ENCODE measurements at regions of chr5 and their contacts with region 1.

Region 1: GRCh38 chr5:91641730-91642350 is 258.7 kb upstream of the ARRDC3 start:
- DNase-seq: peak; percentile 3
- H3K4me3 ChIP-seq: no peak overlapping the region
- H3K27ac ChIP-seq: no peak overlapping the region
- H3K27me3 ChIP-seq: no peaks in the 10 kb centered on the region
- CTCF ChIP-seq: peak; percentile 58

Region 2: GRCh38 chr5:91499943-91500531 is 141.8 kb before region 1 on chr5:
- CTCF ChIA-PET with region 1: interaction called, 14 read pairs
- POLR2A ChIA-PET with region 1: no interaction called
- DNase-seq: peak; percentile 20
- H3K4me3 ChIP-seq: no peak overlapping the region
- H3K27ac ChIP-seq: no peak overlapping the region
- H3K27me3 ChIP-seq: peaks cover 3% of the 10 kb centered on the region
- CTCF ChIP-seq: peak; percentile 66

Region 3: DNA sequence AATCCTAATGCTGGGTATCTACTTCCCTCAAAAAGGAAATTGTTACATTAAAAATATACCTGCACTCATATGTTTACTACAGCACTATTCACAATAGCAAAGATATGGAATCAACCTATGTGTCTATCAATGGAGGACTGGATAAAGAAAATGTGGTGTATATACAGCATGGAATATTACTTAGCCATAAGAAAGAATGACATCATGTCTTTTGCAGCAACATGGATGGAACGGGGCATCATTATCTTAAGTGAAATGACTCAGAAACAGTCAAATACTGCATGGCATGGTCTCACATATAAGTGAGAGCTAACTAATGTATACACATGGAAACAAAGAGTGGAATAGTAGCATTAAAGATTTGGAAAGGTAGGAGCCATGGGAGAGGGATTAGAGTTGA is 15.1 kb after region 1 on chr5:
- CTCF ChIA-PET with region 1: interaction called, 22 read pairs
- POLR2A ChIA-PET with region 1: no interaction called
- DNase-seq: no peak
- H3K4me3 ChIP-seq: no peak overlapping the region
- H3K27ac ChIP-seq: no peak overlapping the region
- H3K27me3 ChIP-seq: no peaks in the 10 kb centered on the region
- CTCF ChIP-seq: no peak

Region 4: DNA sequence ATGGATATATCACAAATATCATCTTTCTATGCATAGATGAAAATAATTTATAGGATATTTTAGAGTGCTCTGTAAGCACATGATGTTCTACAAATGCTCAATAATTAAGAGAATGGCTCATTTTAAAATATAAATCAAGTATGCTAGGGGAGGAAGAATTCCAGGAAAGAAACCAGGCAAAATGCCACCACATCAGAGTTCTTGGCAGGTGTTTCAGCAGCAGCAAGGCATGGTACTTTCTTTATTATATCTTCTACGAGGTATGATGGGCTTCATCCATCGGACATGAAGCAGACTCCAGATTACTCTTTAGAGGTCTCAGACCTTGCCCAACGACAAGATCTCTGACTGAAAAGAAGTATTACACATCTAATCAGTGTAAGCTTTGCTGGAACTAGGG is 57.6 kb after region 1 on chr5:
- CTCF ChIA-PET with region 1: no interaction called
- POLR2A ChIA-PET with region 1: no interaction called
- DNase-seq: no peak
- H3K4me3 ChIP-seq: no peak overlapping the region
- H3K27ac ChIP-seq: no peak overlapping the region
- H3K27me3 ChIP-seq: no peaks in the 10 kb centered on the region
- CTCF ChIP-seq: no peak

Region 5: GRCh38 chr5:91722736-91723467 is 81.1 kb after region 1 on chr5:
- CTCF ChIA-PET with region 1: no interaction called
- POLR2A ChIA-PET with region 1: no interaction called
- DNase-seq: no peak
- H3K4me3 ChIP-seq: no peak overlapping the region
- H3K27ac ChIP-seq: no peak overlapping the region
- H3K27me3 ChIP-seq: no peaks in the 10 kb centered on the region
- CTCF ChIP-seq: no peak

Region 6: GRCh38 chr5:92222449-92222848 is 580.6 kb after region 1 on chr5:
- CTCF ChIA-PET with region 1: interaction called, 11 read pairs
- POLR2A ChIA-PET with region 1: no interaction called
- DNase-seq: no peak
- H3K4me3 ChIP-seq: no peak overlapping the region
- H3K27ac ChIP-seq: no peak overlapping the region
- H3K27me3 ChIP-seq: no peaks in the 10 kb centered on the region
- CTCF ChIP-seq: peak; percentile 31; the same call in 1 of the 2 replicates